ENCODE measurements at regions of chr19 and their contacts with region 1.

Region 1: GRCh38 chr19:56252699-56253422 is 19.7 kb upstream of the EDDM13 start:
- DNase-seq: peak; percentile 77

Region 2: GRCh38 chr19:56083668-56084067 is 169.2 kb before region 1 on chr19:
- CTCF ChIA-PET with region 1: interaction called, 10 read pairs
- POLR2A ChIA-PET with region 1: no interaction called
- DNase-seq: no peak

Region 3: GRCh38 chr19:56333505-56333904 is 80.6 kb after region 1 on chr19:
- CTCF ChIA-PET with region 1: interaction called, 14 read pairs
- POLR2A ChIA-PET with region 1: no interaction called
- DNase-seq: peak; percentile 32